ENCODE measurements at regions of chr18 and their contacts with region 1.

Region 1: GRCh38 chr18:23131693-23132319 is 3.5 kb upstream of the CABLES1 start:
- DNase-seq: no peak
- H3K4me3 ChIP-seq: no peak overlapping the region
- H3K27ac ChIP-seq: no peak overlapping the region
- H3K4me1 ChIP-seq: peaks cover 15% of the 10 kb centered on the region
- H3K27me3 ChIP-seq: no peaks in the 10 kb centered on the region
- CTCF ChIP-seq: peak in 2 of 3 experiments; percentile 59 to 87
- POLR2A ChIP-seq: no peak

Region 2: DNA sequence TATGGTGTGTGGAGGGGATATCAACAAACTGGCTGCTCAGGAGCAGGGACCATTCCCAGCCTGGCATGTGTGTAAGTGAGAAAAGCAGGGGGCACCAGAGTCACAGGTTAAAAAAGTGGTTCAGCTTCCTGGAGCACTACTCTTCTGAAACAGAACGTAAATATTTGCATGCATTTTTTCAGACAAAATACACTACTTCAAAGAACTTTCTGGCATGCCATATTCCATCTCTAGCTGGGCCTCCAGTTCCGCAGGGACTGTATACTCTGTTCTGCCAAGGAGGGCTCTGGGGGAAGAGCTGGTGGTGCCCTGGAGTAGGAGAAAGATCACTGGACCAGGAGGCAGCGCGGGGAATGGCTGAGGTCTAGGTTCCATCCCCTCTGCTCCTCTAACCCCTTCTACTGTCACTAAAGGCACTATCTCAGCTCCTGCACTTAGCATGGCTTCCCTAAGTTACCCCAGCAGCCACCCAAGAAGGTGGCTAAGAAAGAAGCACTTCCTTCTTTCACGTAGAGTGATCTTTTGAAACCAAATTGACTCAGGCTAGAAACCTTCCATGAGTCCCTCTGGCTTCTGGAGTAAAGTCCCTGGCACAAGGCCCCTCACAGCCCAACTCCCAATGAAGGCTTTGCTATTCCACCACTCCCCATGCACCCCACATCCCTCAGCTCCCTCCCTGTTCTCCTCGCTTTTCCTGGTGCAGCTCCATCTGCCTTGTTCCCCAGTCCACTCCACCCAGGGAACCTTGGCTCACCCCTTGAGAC is 54.1 kb before region 1 on chr18:
- intact Hi-C with region 1: no loop called
- DNase-seq: no peak
- H3K4me3 ChIP-seq: no peak overlapping the region
- H3K27ac ChIP-seq: no peak overlapping the region
- H3K4me1 ChIP-seq: no peaks in the 10 kb centered on the region
- H3K27me3 ChIP-seq: no peaks in the 10 kb centered on the region
- CTCF ChIP-seq: no peak
- POLR2A ChIP-seq: no peak

Region 3: GRCh38 chr18:23095463-23095862 is 36.3 kb before region 1 on chr18:
- intact Hi-C with region 1: no loop called
- DNase-seq: no peak
- H3K4me3 ChIP-seq: no peak overlapping the region
- H3K27ac ChIP-seq: no peak overlapping the region
- H3K4me1 ChIP-seq: no peaks in the 10 kb centered on the region
- H3K27me3 ChIP-seq: no peaks in the 10 kb centered on the region
- CTCF ChIP-seq: no peak
- POLR2A ChIP-seq: no peak

Region 4: GRCh38 chr18:23231340-23232021 is 99.7 kb after region 1 on chr18:
- intact Hi-C with region 1: loop called (anchors 10 kb)
- DNase-seq: no peak
- H3K4me3 ChIP-seq: no peak overlapping the region
- H3K27ac ChIP-seq: peak overlapping the region; percentile 79
- H3K4me1 ChIP-seq: peaks cover 62% of the 10 kb centered on the region
- H3K27me3 ChIP-seq: no peaks in the 10 kb centered on the region
- CTCF ChIP-seq: no peak
- POLR2A ChIP-seq: no peak

Region 5: GRCh38 chr18:23356915-23357601 is 225.3 kb after region 1 on chr18:
- intact Hi-C with region 1: loop called (anchors 5 kb)
- DNase-seq: no peak
- H3K4me3 ChIP-seq: no peak overlapping the region
- H3K27ac ChIP-seq: peak overlapping the region; percentile 77
- H3K4me1 ChIP-seq: peaks cover 30% of the 10 kb centered on the region
- H3K27me3 ChIP-seq: no peaks in the 10 kb centered on the region
- CTCF ChIP-seq: no peak
- POLR2A ChIP-seq: no peak

Region 6: GRCh38 chr18:23377669-23378301 is 246.0 kb after region 1 on chr18:
- intact Hi-C with region 1: loop called (anchors 5 kb)
- DNase-seq: no peak
- H3K4me3 ChIP-seq: no peak overlapping the region
- H3K27ac ChIP-seq: peak overlapping the region; percentile 91
- H3K4me1 ChIP-seq: peaks cover 36% of the 10 kb centered on the region
- H3K27me3 ChIP-seq: no peaks in the 10 kb centered on the region
- CTCF ChIP-seq: no peak
- POLR2A ChIP-seq: no peak

Measured in vagina (tissue), 2 donors.